Naive thymus-derived CD4-positive, alpha-beta T cell (primary cell): ENCODE measurements at regions of chr2 and their contacts with region 1.

Region 1: DNA sequence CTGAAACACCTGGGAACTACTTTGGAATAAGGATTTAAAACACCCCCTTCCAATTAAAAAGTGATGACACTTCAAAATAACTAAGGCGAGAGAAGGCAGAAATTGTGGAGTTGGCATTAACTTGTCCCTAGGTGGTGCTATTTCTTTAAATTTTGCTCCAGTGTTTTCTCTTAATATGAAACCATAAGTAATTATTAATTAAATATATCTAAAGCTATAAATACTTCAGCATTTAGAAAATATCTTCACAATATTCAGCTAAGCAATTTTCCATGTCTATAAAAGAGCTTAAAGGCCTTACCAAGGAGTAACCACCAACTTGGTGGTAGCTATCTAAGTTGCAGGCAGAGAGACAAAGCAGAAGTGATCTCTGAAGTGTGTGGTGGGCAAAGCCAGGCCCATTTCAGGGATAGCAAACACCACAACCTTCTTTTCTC is 186.8 kb upstream of the PGAP1 start:
- DNase-seq: peak in 7 of 9 donors; percentile 22 to 58 (median 42)
- ATAC-seq: peak; percentile 70
- H3K4me3 ChIP-seq: no peak overlapping the region
- H3K4me3 Mint-ChIP-seq: no peak overlapping the region
- H3K27ac ChIP-seq: peak overlapping the region; percentile 1
- H3K27ac Mint-ChIP-seq: peak overlapping the region; percentile 36 to 95 (median 76)
- H3K4me1 ChIP-seq: peaks cover 0 to 13% of the 10 kb centered on the region in 2 donors
- H3K4me1 Mint-ChIP-seq: peaks cover 21 to 43% (median 38%) of the 10 kb centered on the region in 7 donors
- H3K27me3 ChIP-seq: no peaks in the 10 kb centered on the region
- H3K27me3 Mint-ChIP-seq: no peaks in the 10 kb centered on the region

Region 2: DNA sequence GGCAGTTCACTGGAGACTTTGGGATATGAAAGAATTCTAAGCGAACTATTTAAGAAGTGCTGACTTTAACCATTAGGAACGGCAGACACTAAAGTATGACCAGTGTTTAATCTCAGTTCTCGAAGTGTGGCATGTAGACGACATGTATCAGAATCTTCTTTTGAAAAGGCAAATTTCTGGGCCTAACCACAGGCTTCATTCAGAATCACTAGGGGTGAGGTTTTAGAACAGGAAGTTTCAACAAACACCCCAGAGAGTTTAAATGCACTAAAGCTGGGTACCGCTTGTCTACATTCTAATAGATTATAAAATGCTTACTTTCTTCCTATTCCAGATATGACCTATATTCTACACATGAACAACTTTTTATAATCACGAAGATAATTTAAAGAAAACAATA is 17.0 kb after region 1 on chr2:
- CTCF ChIA-PET with region 1: interaction called, 21 read pairs
- POLR2A ChIA-PET with region 1: interaction called, 15 read pairs
- intact Hi-C with region 1: no loop called
- DNase-seq: peak in 7 of 9 donors; percentile 38 to 64 (median 50)
- ATAC-seq: peak; percentile 92
- H3K4me3 ChIP-seq: no peak overlapping the region
- H3K4me3 Mint-ChIP-seq: peak overlapping the region; percentile 6 to 67 (median 45)
- H3K27ac ChIP-seq: peak overlapping the region; percentile 46
- H3K27ac Mint-ChIP-seq: peak overlapping the region; percentile 32 to 95 (median 71)
- H3K4me1 ChIP-seq: peaks cover 42 to 51% of the 10 kb centered on the region in 2 donors
- H3K4me1 Mint-ChIP-seq: peaks cover 60 to 95% (median 80%) of the 10 kb centered on the region in 7 donors
- H3K27me3 ChIP-seq: no peaks in the 10 kb centered on the region
- H3K27me3 Mint-ChIP-seq: no peaks in the 10 kb centered on the region

Region 3: GRCh38 chr2:197145471-197146138 is 32.3 kb after region 1 on chr2:
- CTCF ChIA-PET with region 1: interaction called, 7 read pairs
- POLR2A ChIA-PET with region 1: interaction called, 4 read pairs
- intact Hi-C with region 1: loop called in 1 of 2 experiments (anchors 2 kb)
- DNase-seq: peak in 7 of 9 donors; percentile 46 to 74 (median 66)
- ATAC-seq: peak; percentile 95
- H3K4me3 ChIP-seq: peak overlapping the region; percentile 8
- H3K4me3 Mint-ChIP-seq: peak overlapping the region; percentile 0 to 71 (median 49)
- H3K27ac ChIP-seq: peak overlapping the region; percentile 62
- H3K27ac Mint-ChIP-seq: peak overlapping the region; percentile 73 to 98 (median 93)
- H3K4me1 ChIP-seq: peaks cover 56 to 77% of the 10 kb centered on the region in 2 donors
- H3K4me1 Mint-ChIP-seq: peaks cover 57 to 93% (median 84%) of the 10 kb centered on the region in 7 donors
- H3K27me3 ChIP-seq: no peaks in the 10 kb centered on the region
- H3K27me3 Mint-ChIP-seq: no peaks in the 10 kb centered on the region

Region 4: GRCh38 chr2:197152451-197153228 is 39.3 kb after region 1 on chr2:
- CTCF ChIA-PET with region 1: interaction called, 12 read pairs
- POLR2A ChIA-PET with region 1: no interaction called
- intact Hi-C with region 1: loop called in 1 of 2 experiments (anchors 1 kb)
- DNase-seq: peak in 7 of 9 donors; percentile 53 to 66 (median 59)
- ATAC-seq: peak; percentile 93
- H3K4me3 ChIP-seq: peak overlapping the region; percentile 10
- H3K4me3 Mint-ChIP-seq: peak overlapping the region; percentile 56 to 83 (median 78)
- H3K27ac ChIP-seq: peak overlapping the region; percentile 57
- H3K27ac Mint-ChIP-seq: peak overlapping the region; percentile 68 to 98 (median 92)
- H3K4me1 ChIP-seq: peaks cover 37 to 59% of the 10 kb centered on the region in 2 donors
- H3K4me1 Mint-ChIP-seq: peaks cover 65 to 92% (median 85%) of the 10 kb centered on the region in 7 donors
- H3K27me3 ChIP-seq: no peaks in the 10 kb centered on the region
- H3K27me3 Mint-ChIP-seq: no peaks in the 10 kb centered on the region

Region 5: GRCh38 chr2:197168705-197169104 is 55.4 kb after region 1 on chr2:
- CTCF ChIA-PET with region 1: interaction called, 39 read pairs
- POLR2A ChIA-PET with region 1: interaction called, 3 read pairs
- intact Hi-C with region 1: loop called (anchors 1 kb)
- DNase-seq: peak; percentile 21 to 63 (median 53)
- ATAC-seq: peak; percentile 91
- H3K4me3 ChIP-seq: no peak overlapping the region
- H3K4me3 Mint-ChIP-seq: peak overlapping the region in 7 of 10 donors; percentile 1 to 59 (median 19)
- H3K27ac ChIP-seq: no peak overlapping the region
- H3K27ac Mint-ChIP-seq: peak overlapping the region; percentile 25 to 93 (median 84)
- H3K4me1 ChIP-seq: peaks cover 3 to 60% of the 10 kb centered on the region in 2 donors
- H3K4me1 Mint-ChIP-seq: peaks cover 45 to 91% (median 82%) of the 10 kb centered on the region in 7 donors
- H3K27me3 ChIP-seq: no peaks in the 10 kb centered on the region
- H3K27me3 Mint-ChIP-seq: no peaks in the 10 kb centered on the region

Region 6: GRCh38 chr2:197179744-197180498 is 66.6 kb after region 1 on chr2:
- CTCF ChIA-PET with region 1: interaction called, 10 read pairs
- POLR2A ChIA-PET with region 1: no interaction called
- intact Hi-C with region 1: no loop called
- DNase-seq: no peak
- ATAC-seq: no peak
- H3K4me3 ChIP-seq: no peak overlapping the region
- H3K4me3 Mint-ChIP-seq: peak overlapping the region in 2 of 10 donors; percentile 12 to 42
- H3K27ac ChIP-seq: no peak overlapping the region
- H3K27ac Mint-ChIP-seq: peak overlapping the region in 6 of 9 donors; percentile 41 to 87 (median 63)
- H3K4me1 ChIP-seq: peaks cover 8 to 29% of the 10 kb centered on the region in 2 donors
- H3K4me1 Mint-ChIP-seq: peaks cover 42 to 97% (median 80%) of the 10 kb centered on the region in 7 donors
- H3K27me3 ChIP-seq: no peaks in the 10 kb centered on the region
- H3K27me3 Mint-ChIP-seq: no peaks in the 10 kb centered on the region

Region 7: GRCh38 chr2:197356136-197356535 is 242.8 kb after region 1 on chr2:
- CTCF ChIA-PET with region 1: interaction called, 16 read pairs
- POLR2A ChIA-PET with region 1: interaction called, 7 read pairs
- intact Hi-C with region 1: loop called in 1 of 2 experiments (anchors 5 kb)
- DNase-seq: peak in 5 of 9 donors; percentile 25 to 42 (median 39)
- ATAC-seq: peak; percentile 70
- H3K4me3 ChIP-seq: no peak overlapping the region
- H3K4me3 Mint-ChIP-seq: peak overlapping the region in 8 of 10 donors; percentile 6 to 57 (median 30)
- H3K27ac ChIP-seq: no peak overlapping the region
- H3K27ac Mint-ChIP-seq: peak overlapping the region in 7 of 9 donors; percentile 1 to 82 (median 31)
- H3K4me1 ChIP-seq: peaks cover 0 to 10% of the 10 kb centered on the region in 2 donors
- H3K4me1 Mint-ChIP-seq: peaks cover 5 to 35% (median 30%) of the 10 kb centered on the region in 7 donors
- H3K27me3 ChIP-seq: no peaks in the 10 kb centered on the region
- H3K27me3 Mint-ChIP-seq: no peaks in the 10 kb centered on the region